Adrenal gland (tissue), 19 donors: ENCODE measurements at regions of chr5 and their contacts with region 1.

Region 1: DNA sequence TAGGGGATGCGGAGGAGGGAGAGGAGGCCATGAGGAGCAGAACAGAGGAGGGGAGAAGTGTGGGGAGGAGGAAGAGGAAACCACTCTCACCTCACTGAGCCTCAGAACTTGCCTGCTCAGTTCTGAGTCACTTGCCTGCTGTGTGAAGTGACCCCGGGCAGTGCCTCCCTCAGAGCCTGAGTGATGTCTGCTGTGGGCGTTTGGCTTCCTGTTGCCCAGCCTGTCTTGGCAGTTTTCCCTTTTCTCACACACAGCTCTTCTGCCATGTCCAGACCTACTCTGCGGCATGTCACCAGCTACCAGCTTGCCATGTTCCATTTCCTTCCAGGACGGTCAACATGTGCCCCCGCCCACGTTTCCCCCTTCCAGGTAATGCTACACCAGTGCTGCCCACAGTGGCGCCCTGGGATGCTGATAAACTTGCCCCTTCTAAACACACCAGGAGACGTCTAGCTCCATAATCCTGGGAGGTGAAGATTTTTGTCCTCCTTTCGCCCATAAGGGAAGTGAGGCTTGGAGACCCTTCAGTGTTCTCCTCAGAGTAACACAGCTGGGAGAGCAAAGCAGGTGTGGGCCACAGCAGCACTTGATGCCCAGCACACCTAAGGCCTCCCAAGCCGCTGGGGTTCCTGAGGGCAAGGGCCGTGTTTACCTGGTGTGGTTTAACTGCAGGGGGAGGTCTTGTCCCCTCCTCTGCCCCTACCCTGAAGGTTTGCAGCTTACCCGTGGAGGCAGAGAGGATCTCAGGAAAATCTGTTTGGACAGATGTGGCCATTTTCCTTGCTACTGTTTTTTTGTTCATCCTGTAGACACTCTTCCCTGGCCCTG is 63.8 kb upstream of the RNF130 start:
- DNase-seq: peak in 1 of 7 donors; percentile 15
- H3K4me3 ChIP-seq: no peak overlapping the region
- H3K27ac ChIP-seq: no peak overlapping the region
- H3K4me1 ChIP-seq: no peaks in the 10 kb centered on the region
- H3K27me3 ChIP-seq: peaks cover 8% of the 10 kb centered on the region
- CTCF ChIP-seq: no peak
- POLR2A ChIP-seq: no peak

Region 2: DNA sequence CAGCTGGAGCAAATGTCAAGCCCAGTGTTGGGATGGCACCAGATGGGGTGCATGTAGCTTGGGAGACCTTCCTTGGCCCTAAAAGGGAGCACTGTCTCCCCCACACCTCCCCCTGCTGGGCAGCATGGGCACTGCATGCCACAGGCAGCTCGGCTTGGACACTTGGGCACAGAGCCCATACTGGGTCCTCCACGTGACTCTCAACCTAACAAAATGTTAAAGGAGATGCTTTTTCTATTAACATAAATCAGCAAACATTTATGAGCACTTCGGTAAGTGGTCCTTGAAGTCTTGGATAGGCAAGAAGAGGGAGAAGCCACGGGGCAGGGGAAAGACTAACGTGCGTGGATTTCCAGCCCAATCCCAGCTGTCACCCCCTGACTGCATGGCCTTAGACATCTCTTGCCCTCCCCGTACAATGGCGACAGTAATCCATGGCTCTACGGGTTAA is 180.4 kb after region 1 on chr5:
- intact Hi-C with region 1: loop called in 1 of 2 experiments (anchors 10 kb)
- DNase-seq: peak; percentile 67 to 84 (median 73)
- H3K4me3 ChIP-seq: no peak overlapping the region
- H3K27ac ChIP-seq: no peak overlapping the region
- H3K4me1 ChIP-seq: no peaks in the 10 kb centered on the region
- H3K27me3 ChIP-seq: no peaks in the 10 kb centered on the region
- CTCF ChIP-seq: peak; percentile 76 to 93 (median 87)
- POLR2A ChIP-seq: no peak